Gastrocnemius medialis (tissue), 4 donors: ENCODE measurements at regions of chr20 and their contacts with region 1.

Region 1: DNA sequence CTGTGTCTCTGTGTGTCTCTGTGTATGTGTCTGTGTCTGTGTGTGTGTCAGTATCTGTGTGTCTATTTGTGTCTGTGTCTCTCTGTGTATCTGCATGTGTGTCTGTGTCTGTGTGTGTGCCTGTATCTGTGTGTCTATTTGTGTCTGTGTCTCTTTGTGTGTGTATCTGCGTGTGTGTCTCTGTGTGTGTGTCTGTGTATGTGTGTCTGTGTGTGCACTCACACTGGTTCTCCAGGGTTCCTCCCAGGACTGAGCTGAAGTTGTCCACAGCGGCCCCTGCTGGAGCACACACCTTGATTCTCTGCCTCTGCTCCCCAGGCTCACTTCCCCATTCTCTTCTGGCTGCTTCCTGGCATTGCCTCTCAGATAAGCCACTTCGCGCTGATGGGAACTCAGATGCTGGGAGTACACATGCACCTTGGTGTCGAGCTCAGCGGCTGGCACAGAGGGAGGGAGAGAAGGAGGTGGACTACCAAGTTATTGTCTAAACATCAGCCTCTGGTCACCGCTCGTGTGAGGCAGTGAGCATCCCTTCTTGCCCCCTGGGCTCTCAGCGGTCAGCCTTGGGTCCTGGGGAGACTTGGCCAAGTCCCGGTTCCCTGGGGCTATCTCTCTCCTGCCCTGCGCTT is 104.9 kb upstream of the NXT1 start:
- DNase-seq: peak in 1 of 2 donors; percentile 24
- ATAC-seq: peak in 1 of 2 donors; percentile 27
- H3K4me3 ChIP-seq: no peak overlapping the region
- H3K27ac ChIP-seq: peak overlapping the region in 2 of 4 donors; percentile 39 to 50
- H3K4me1 ChIP-seq: peaks cover 0 to 5% of the 10 kb centered on the region in 2 donors
- H3K27me3 ChIP-seq: no peaks in the 10 kb centered on the region
- CTCF ChIP-seq: peak in 4 of 5 experiments; percentile 4 to 37 (median 27)
- POLR2A ChIP-seq: no peak

Region 2: GRCh38 chr20:23050847-23051631 is 194.6 kb before region 1 on chr20:
- in situ Hi-C with region 1: no loop called
- intact Hi-C with region 1: no loop called
- DNase-seq: peak; percentile 55 to 84
- ATAC-seq: peak; percentile 20 to 37
- H3K4me3 ChIP-seq: peak overlapping the region; percentile 63 to 84 (median 72)
- H3K27ac ChIP-seq: peak overlapping the region; percentile 93 to 95 (median 94)
- H3K4me1 ChIP-seq: peaks cover 19 to 32% of the 10 kb centered on the region in 2 donors
- H3K27me3 ChIP-seq: no peaks in the 10 kb centered on the region
- CTCF ChIP-seq: peak; percentile 71 to 87 (median 75)
- POLR2A ChIP-seq: peak; percentile 27 to 51

Region 3: GRCh38 chr20:23225407-23226072 is 20.1 kb before region 1 on chr20:
- in situ Hi-C with region 1: no loop called
- intact Hi-C with region 1: no loop called
- DNase-seq: peak; percentile 52 to 72
- ATAC-seq: peak; percentile 82 to 83
- H3K4me3 ChIP-seq: no peak overlapping the region
- H3K27ac ChIP-seq: no peak overlapping the region
- H3K4me1 ChIP-seq: no peaks in the 10 kb centered on the region
- H3K27me3 ChIP-seq: no peaks in the 10 kb centered on the region
- CTCF ChIP-seq: no peak
- POLR2A ChIP-seq: no peak

Region 4: DNA sequence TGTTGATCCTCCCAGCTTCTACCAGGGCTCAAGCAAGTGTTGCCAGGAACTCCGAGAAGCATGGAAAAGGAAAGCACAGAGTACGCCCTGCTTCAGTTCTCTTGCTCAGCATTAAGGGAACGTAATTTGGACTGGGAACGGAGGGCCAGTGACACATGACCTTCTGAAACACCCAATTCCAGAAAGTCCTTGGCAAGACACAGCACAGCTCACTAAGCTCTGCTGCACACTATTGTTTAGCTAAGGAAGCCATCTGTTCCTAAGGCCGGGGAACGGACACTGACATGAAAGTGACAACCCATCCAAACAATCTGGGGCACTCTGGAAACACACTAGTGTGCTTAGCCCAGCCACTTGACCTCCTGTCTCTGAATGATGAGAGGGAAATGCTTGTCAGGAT is 48.0 kb after region 1 on chr20:
- in situ Hi-C with region 1: no loop called
- intact Hi-C with region 1: loop called (anchors 5 kb)
- DNase-seq: peak; percentile 34 to 49
- ATAC-seq: peak; percentile 83
- H3K4me3 ChIP-seq: no peak overlapping the region
- H3K27ac ChIP-seq: peak overlapping the region; percentile 39 to 73 (median 55)
- H3K4me1 ChIP-seq: peaks cover 10% of the 10 kb centered on the region in 2 donors
- H3K27me3 ChIP-seq: no peaks in the 10 kb centered on the region
- CTCF ChIP-seq: no peak
- POLR2A ChIP-seq: no peak